Activated T-helper 2 cell treated with anti-CD3 and anti-CD28 coated beads, Interferon-gamma antibody, Interleukin-2, Interleukin-4, amounts not matched to agents 10 μg/mL and 5 μg/mL and 100 μg/mL, durations not matched to agents 14 hours and 24 hours and 36 hours (primary cell): ENCODE measurements at regions of chr19 and their contacts with region 1.

Region 1: DNA sequence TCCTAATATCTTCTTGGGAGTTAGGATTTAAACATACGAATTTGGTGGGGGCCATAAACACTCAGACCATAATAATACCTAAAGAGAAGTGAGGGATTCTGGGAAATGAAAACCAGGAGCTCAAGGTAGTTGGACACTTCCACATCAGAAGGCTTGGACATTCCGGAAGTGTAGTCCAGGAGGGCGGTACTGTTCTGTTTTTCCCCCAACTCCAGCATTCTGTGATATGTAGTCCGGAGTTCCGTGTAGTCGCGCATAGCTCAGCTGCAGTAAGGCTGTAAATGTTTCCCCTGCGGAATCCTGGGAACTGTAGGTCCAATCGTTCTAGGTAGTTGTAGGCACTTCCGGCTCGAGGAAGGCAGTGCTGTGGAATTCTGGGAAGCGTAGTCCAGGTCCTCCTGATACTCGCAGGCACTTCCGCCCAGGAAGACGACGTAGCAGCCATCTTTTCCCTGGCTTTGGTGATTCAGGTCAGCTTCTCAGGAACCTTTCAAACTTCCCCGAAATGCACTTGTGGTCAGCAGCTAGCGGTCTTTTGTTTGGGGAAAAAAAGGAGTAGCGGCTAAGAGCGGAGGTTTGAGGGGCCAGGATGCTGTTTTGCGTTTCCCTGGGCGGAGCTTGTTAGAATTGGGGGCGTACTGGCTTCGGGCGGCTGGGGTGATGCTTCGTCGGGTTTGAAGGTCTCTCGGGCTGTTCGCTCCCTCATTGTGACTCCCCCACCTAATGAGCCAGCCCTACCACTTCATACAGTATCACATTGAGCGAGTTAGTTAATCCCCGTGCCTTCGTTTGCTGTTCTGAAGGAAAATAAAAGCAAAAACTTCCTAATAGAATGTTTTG is at the start of gene ZNF226:
- DNase-seq: peak; percentile 71
- H3K4me3 Mint-ChIP-seq: peak within 1 kb of the TSS; percentile 85
- H3K27ac Mint-ChIP-seq: peak within 1 kb of the TSS; percentile 80
- H3K4me1 Mint-ChIP-seq: peaks cover 22% of the 10 kb centered on the region
- H3K27me3 Mint-ChIP-seq: no peaks in the 10 kb centered on the region
- total RNA-seq, gene ZNF226: 6.6 and 9.8 TPM in 2 replicates

Region 2: DNA sequence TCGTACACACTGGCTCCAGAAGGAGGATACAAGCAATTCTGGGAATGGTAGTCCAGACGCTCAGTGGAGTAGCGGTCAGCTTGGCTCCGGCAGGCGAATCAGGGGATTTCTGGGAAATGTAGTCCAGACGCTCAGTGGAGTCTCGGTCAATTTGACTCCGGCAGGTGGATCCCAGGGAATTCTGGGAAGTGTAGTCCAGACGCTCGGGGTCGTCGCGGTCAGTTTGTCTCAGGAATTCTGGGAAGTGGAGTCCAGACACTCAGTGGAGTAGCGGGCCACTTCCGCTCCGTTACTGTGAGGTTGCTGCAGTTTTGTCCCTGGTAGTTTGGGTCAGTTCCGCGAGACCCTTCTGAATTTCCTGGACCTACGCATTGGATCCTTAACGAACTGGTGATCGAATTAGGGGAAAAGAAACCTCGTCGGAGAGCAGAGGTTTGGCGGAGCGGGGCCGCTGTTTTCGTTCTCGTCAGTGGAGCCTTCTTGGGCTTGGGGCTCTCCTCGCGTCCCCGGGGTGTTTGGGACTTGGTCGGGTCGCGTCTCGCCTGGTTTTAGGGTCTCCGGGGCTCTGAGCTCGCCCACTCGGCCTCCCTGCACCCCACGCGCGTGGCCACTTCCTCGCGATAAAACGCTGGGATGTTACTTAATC is 51.6 kb before region 1 on chr19 and contains the start of gene ZNF225:
- intact Hi-C with region 1: loop called (anchors 1 kb)
- DNase-seq: peak; percentile 81
- H3K4me3 Mint-ChIP-seq: peak within 1 kb of the TSS; percentile 99
- H3K27ac Mint-ChIP-seq: peak within 1 kb of the TSS; percentile 82
- H3K4me1 Mint-ChIP-seq: peaks cover 14% of the 10 kb centered on the region
- H3K27me3 Mint-ChIP-seq: no peaks in the 10 kb centered on the region
- total RNA-seq, gene ZNF225: 3.5 and 3.6 TPM in 2 replicates

Region 3: DNA sequence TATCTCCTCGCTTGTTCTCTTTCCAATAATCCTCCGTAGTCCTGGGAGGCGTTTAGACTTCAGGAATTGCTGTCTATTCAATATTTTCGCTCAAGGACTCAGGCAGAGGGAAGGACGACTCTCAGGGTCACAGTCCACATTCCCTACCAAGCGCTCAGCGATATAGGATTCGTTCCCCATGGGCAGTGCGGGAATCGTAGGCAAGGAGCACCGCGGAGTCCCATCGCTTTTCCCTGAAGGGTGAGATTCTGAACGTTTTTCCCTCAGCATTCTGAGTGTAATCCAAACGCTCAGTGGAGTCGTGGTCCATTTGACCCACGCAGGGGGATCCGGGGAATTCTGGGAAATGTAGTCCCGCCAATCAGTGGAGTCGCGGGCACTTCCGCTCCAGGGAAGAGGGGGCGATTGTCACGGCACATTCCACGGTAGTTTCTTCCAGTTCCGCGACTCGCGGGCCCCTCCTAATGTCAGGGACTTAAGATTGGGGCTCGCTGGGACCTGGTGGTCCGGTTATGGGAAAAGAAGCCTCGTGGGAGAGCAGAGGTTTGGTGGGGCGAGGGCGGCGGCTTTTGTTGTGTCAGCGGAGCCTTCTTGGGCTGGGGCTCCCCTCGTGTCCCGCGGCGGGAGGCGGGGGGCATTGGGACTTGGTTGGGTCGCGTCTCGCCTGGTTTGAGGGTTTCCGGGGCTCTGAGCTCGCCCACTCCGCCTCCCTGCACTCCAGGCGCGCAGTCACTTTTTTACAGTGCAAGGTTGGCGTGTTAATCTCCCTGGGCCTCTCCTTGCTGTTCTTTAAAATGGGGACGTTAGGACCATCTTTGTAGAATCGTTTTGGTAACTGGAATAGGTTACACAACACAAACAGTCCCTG is 23.5 kb before region 1 on chr19 and contains the start of gene ZNF234:
- intact Hi-C with region 1: loop called (anchors 2 kb)
- DNase-seq: peak; percentile 57
- H3K4me3 Mint-ChIP-seq: peak within 1 kb of the TSS; percentile 96
- H3K27ac Mint-ChIP-seq: peak within 1 kb of the TSS; percentile 89
- H3K4me1 Mint-ChIP-seq: peaks cover 14% of the 10 kb centered on the region
- H3K27me3 Mint-ChIP-seq: no peaks in the 10 kb centered on the region
- total RNA-seq, gene ZNF234: 10.3 and 11.6 TPM in 2 replicates

Region 4: DNA sequence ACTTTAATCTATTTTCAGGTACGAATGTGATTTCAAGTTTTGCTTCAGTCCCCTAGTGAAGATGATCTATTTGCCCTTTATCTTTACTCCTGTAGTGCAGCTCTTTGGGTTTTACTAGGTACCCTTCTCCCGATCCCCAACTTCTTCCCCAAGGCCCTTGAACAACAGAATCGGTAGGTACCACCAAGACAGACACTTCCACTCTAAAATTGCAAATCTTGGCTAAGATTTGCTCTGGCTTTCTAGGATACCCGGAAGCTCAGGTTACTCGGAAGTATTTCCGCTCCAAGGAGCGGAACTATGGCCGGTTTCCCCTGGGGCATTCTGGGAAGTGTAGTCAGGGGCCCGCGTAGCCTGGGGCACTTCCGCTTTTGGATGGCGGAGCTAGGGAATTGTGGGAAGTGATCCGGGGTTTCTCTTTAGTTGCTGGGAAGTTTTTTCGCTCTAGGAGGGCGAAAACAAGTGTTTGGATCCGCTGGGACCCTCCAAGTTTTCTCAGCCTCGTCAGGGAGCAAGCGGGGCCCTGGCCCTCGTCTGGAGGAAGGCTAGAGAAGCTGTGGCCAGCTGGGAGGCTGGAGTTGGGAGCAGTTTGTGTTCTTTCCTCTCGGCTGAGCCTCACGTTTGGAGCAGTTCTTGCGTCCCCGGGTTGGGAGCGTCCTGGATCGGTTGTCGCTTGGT is 42.4 kb after region 1 on chr19:
- intact Hi-C with region 1: loop called (anchors 1 kb)
- DNase-seq: peak; percentile 71
- H3K4me3 Mint-ChIP-seq: peak overlapping the region; percentile 85
- H3K27ac Mint-ChIP-seq: peak overlapping the region; percentile 76
- H3K4me1 Mint-ChIP-seq: peaks cover 8% of the 10 kb centered on the region
- H3K27me3 Mint-ChIP-seq: no peaks in the 10 kb centered on the region